ENCODE measurements at regions of chr2 and their contacts with region 1.

Region 1: GRCh38 chr2:20576598-20577115 is 74.2 kb downstream of the HS1BP3 start:
- DNase-seq: peak; percentile 78
- ATAC-seq: peak; percentile 96
- H3K4me3 Mint-ChIP-seq: peak overlapping the region; percentile 43
- H3K27ac Mint-ChIP-seq: peak overlapping the region; percentile 99
- H3K4me1 Mint-ChIP-seq: peaks cover 65% of the 10 kb centered on the region
- H3K27me3 Mint-ChIP-seq: no peaks in the 10 kb centered on the region

Region 2: DNA sequence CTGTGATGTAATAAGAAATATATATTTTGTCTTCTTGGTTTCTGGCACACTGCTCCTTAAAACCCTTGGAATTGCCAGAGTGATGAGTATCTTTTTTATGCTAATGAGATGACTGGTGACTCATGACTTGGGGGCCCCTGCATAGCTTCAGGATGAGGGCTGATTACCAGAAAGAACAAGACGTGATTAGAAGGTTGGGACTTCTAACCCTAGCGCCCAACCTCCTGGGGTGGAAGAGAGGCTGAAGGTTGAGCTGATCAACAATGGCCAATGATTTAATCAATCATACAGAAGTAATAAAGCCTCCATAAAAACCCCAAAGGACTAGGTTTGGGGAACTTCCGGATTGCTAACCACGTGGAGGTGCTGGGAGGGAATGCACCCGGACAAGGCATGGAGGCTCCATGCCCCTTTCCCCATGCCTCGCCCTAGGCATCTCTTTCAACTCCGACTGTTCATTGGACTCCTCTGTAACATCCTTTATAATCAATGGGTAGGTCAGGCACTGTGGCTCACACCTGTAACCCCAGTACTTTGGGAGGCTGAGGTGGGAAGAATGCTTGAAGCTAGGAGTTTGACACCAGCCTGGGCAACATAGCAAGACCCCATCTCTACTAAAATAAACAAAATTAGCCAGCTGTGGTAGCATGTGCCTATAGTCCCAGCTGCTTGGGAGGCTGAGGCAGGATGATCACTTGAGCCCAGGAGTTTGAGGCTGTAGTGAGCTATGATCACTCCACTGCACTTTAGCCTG is 14.8 kb before region 1 on chr2:
- CTCF ChIA-PET with region 1: no interaction called
- DNase-seq: no peak
- ATAC-seq: no peak
- H3K4me3 Mint-ChIP-seq: no peak overlapping the region
- H3K27ac Mint-ChIP-seq: no peak overlapping the region
- H3K4me1 Mint-ChIP-seq: no peaks in the 10 kb centered on the region
- H3K27me3 Mint-ChIP-seq: peaks cover 16% of the 10 kb centered on the region

Region 3: GRCh38 chr2:20595431-20596192 is 19.0 kb after region 1 on chr2:
- CTCF ChIA-PET with region 1: interaction called, 10 read pairs
- DNase-seq: peak; percentile 81
- ATAC-seq: peak; percentile 89
- H3K4me3 Mint-ChIP-seq: peak overlapping the region; percentile 21
- H3K27ac Mint-ChIP-seq: peak overlapping the region; percentile 86
- H3K4me1 Mint-ChIP-seq: peaks cover 31% of the 10 kb centered on the region
- H3K27me3 Mint-ChIP-seq: no peaks in the 10 kb centered on the region